ENCODE measurements at regions of chr2 and their contacts with region 1.

Region 1: DNA sequence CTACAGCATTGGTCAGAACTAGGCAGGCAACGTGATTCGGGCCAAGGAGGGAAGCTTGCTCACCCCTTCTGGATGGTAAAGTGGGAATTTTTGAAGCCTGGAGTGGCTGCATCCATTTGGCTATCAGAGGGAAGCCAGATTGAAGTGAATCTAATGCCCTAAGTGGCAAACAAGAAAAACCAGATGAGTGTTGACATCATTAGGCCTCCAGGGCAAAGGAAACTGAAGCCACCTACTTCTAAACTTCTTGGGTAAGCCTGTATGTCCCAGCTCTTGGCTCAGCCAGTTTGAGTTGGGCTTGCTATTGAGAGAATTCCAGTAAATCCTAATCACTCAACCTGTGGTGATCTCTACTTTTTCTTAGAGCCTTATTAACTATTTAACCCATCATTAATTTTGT is 20.9 kb downstream of the SOX11 start:
- DNase-seq: no peak
- H3K4me3 ChIP-seq: no peak overlapping the region
- H3K27ac ChIP-seq: no peak overlapping the region
- H3K4me1 ChIP-seq: no peaks in the 10 kb centered on the region
- H3K27me3 ChIP-seq: no peaks in the 10 kb centered on the region
- CTCF ChIP-seq: no peak

Region 2: DNA sequence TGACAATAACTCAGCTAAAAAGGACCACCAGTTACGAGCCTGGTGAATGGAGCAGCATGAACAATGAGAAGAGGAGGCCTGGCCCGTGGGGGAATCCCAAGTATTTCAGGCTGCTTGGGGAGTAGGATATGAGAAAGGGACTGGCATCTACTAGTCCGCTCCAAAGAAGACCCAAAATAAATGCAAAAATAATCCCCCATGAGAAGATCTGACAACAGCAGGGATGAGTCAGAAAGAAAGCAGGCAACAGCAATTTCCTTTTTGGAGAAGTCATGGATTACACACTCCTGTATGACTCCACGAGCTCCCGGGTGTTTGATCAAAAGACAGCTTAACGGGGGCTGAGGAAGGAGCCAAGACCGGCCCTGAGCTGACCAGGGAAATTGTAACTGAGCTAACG is 90.5 kb after region 1 on chr2:
- CTCF ChIA-PET with region 1: no interaction called
- dilution Hi-C with region 1: loop called (anchors 5 kb)
- in situ Hi-C with region 1: no loop called
- intact Hi-C with region 1: no loop called
- DNase-seq: no peak
- H3K4me3 ChIP-seq: no peak overlapping the region
- H3K27ac ChIP-seq: no peak overlapping the region
- H3K4me1 ChIP-seq: no peaks in the 10 kb centered on the region
- H3K27me3 ChIP-seq: no peaks in the 10 kb centered on the region
- CTCF ChIP-seq: no peak

Measured in mammary epithelial cell (primary cell).